ENCODE measurements at regions of chr10 and their contacts with region 1.

Region 1: DNA sequence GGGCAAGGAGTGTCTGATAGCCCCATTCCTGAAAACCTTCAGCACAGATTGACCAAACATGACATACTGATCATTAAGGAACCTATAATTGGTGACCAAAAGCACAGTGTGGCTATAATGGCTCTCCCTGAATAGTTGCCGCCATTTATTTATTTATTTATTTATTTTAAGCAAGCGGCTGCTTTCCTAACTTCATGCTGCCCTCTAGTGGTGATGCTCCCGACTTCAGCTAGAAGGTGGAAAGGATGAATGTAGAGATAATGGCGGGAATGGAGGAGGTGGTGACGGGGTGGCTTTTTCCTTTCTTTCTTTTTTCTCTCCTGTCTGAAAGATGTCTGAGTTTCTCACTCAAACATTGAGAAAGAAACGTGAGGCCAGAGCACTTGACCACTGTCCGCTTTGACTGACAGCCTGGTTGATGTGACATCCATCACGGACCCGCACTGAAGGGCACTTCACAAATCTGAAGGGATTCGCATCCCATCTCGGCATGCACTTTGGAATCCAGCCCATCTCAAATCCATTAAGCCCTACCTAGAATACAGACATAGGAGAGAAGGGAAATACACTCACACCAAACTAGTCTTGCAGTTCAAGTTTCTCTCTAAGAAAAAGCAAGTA is 1090.1 kb downstream of the KCNMA1 start:
- ATAC-seq: peak; percentile 26 to 74 (median 46)
- H3K4me3 ChIP-seq: no peak overlapping the region
- H3K27ac ChIP-seq: no peak overlapping the region
- H3K4me1 ChIP-seq: peaks cover 22 to 40% of the 10 kb centered on the region in 2 donors

Region 2: DNA sequence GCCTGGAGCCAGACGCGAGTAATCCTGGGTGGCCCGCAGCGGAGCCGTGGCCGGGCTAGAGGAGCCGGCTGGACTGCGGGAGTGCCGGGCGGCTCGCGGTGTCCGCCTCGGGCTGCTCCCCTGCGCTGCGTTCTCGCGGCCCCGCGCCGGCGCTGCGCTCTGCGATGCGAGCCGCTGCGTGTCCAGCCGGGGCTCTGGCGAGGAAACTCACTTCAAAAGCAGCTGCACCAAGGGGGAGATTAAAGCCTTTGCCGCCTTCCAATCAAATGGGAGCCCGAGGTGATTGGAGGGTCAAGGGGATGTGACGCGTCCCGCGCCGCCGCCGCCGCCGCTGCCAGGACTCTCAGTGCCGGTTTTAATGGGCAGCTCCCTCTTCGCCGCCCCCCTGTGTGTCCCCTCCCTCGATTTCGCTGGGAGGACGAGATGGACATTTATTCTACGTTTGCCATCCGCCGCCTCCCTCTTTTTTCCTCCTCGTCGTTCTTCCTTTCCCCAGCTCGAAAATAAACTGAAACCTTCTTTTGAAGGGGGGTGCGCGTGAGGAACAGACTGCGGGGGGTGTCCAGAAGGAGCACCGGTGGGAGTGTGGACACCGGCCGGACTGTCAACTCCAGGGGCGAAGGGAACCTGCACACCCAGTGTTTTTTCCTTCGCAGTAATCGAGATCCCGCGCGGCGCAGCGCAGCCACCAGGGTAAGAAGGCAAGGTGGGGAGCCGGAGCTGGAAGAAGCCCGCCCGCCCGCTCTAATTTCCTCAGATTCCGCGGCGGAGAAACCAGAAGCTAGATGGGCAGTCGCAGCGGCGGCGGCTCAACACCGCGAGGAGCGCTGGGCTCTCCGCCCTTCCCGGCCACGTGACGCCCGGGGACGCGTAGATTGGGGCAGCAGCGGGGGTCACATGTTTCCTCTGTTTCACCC is 1145.6 kb before region 1 on chr10 and contains the start of gene ZNF503:
- in situ Hi-C with region 1: loop called in 2 of 9 experiments (anchors 10 to 25 kb)
- ATAC-seq: peak; percentile 52 to 74 (median 58)
- H3K4me3 ChIP-seq: peak within 1 kb of the TSS; percentile 47 to 94 (median 56)
- H3K27ac ChIP-seq: peak within 1 kb of the TSS; percentile 92
- H3K4me1 ChIP-seq: peaks cover 0 to 9% of the 10 kb centered on the region in 2 donors
- total RNA-seq, gene ZNF503: 1.3 to 30.3 (median 19.0) TPM

Region 3: GRCh38 chr10:76036111-76036940 is 511.1 kb before region 1 on chr10:
- in situ Hi-C with region 1: loop called in 1 of 9 experiments (anchors 25 kb)
- ATAC-seq: peak; percentile 46 to 93 (median 62)
- H3K4me3 ChIP-seq: peak overlapping the region in 3 of 5 donors; percentile 0 to 9 (median 9)
- H3K27ac ChIP-seq: peak overlapping the region; percentile 56 to 65
- H3K4me1 ChIP-seq: peaks cover 43% of the 10 kb centered on the region in 2 donors

Region 4: DNA sequence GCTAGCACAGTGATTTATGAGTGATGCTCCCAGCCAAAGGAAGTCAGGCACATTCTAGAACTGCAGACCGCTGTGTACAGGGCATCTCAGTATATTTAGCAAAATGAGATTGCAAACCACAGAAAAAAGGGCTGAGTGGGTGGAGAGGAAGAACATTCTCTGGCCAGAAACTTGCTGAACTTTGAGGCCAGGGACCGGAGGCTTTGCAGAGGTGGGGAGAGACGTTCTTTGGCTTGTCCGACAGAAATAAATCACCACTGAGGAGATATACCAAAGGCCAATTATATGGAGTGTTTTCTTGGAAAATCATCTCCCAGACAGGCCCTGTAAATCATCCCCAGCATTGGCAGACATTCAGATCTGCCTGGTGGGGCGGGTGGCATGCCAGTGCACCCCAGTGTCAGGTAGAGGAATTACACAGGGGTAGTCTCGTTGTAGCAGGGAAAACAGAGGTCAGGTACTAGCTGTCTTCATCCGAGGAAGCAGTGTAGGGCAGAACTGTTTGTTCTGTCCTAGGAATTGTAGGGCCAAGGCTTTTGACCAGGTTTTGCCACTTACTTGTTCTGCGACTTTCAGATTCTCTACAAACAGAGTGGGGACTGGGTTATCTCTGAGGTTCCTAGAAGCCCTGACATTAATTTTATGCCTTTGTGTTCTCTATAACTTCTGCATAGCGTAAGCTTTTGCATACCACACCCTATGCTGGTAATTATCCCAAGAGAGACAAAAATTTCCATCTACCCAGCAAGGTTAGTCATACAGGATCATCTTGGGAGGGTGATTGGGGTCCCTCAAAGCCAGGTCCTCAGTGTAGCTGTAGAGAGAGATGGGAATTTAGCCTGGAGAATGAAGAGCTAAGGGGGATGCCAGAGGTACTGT is 460.5 kb before region 1 on chr10:
- in situ Hi-C with region 1: loop called in 1 of 9 experiments (anchors 25 kb)
- ATAC-seq: peak; percentile 60 to 94 (median 72)
- H3K4me3 ChIP-seq: no peak overlapping the region
- H3K27ac ChIP-seq: no peak overlapping the region
- H3K4me1 ChIP-seq: peaks cover 21 to 22% of the 10 kb centered on the region in 2 donors

Region 5: DNA sequence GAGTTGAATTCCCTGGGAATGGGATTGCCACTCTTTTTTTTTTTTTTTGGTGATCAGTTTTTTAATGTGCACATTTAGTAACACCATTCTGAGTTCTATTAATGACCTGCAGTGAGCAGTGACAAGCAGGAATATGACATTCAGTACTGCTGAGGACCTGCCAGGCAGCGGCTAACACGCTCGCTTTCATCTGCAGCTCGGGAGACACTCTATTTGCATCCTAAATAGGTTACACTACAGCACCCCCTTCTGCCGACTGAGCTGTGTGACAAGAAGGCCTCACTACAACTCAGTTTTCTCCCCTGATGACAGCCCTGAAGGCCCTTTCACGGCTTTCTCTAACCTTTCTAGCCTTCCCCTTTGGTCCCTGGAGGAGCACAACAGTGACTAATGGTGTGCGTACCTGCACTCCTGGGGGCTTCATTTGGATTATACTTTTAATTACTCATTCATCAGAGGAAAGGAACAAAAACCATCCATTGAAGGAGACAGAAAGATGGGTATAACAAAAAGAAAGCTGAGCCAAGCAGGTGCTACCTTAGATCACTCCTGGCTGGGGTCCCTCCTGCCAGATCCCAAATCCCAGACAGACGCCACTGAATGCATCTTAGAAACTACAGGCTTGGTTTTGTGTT is 243.7 kb before region 1 on chr10:
- in situ Hi-C with region 1: loop called in 2 of 9 experiments (anchors 25 kb)
- ATAC-seq: peak; percentile 93 to 99 (median 98)
- H3K4me3 ChIP-seq: no peak overlapping the region
- H3K27ac ChIP-seq: no peak overlapping the region
- H3K4me1 ChIP-seq: peaks cover 23 to 33% of the 10 kb centered on the region in 2 donors

Region 6: DNA sequence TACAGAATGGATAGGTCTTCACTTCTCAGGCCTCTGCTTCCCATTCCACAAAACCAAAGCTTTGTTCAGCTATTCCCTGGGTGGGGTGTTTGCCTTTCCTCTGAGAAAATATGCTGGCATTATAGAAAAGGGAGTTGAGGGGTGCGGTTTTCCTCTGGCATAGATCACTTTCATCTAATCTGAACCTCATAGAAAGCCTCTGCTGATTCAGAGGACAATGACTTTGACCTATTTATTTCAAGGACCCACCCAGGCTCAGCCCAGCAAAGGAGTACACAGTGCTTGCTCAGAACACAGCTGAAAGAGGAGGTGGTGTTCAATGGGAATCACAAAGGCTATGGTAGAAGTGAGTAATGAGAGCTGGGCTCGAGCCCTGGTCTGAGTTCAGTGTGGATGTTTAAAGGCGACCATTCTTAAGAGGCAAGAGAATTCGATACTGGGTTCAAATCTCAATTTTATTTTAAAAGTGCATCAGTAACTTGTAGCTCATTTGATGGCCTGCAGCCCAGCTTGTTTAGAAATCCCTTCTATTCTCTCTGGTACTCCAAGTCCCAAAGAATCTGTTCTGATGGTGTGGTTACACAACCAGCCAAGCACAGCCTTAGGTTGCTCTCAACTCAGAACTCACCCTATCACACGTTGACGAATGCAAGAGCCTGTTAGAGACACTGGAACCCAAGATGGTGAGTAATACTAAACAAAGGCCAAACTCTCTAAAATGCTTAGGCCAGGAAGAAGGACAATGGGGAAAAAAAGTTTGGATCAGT is 103.2 kb before region 1 on chr10:
- in situ Hi-C with region 1: no loop called
- ATAC-seq: peak in 7 of 8 experiments; percentile 32 to 98 (median 49)
- H3K4me3 ChIP-seq: no peak overlapping the region
- H3K27ac ChIP-seq: no peak overlapping the region
- H3K4me1 ChIP-seq: peaks cover 0 to 5% of the 10 kb centered on the region in 2 donors

Region 7: GRCh38 chr10:76736392-76736791 is 188.9 kb after region 1 on chr10:
- in situ Hi-C with region 1: no loop called
- ATAC-seq: peak in 1 of 8 experiments; percentile 20
- H3K4me3 ChIP-seq: no peak overlapping the region
- H3K27ac ChIP-seq: peak overlapping the region; percentile 38 to 76
- H3K4me1 ChIP-seq: peaks cover 31 to 61% of the 10 kb centered on the region in 2 donors

Region 8: GRCh38 chr10:76984559-76985443 is 437.3 kb after region 1 on chr10:
- in situ Hi-C with region 1: loop called in 1 of 9 experiments (anchors 25 kb)
- ATAC-seq: peak; percentile 82 to 97 (median 90)
- H3K4me3 ChIP-seq: no peak overlapping the region
- H3K27ac ChIP-seq: no peak overlapping the region
- H3K4me1 ChIP-seq: peaks cover 2 to 7% of the 10 kb centered on the region in 2 donors

Measured in motor neuron (in vitro differentiated cells).